ENCODE measurements at regions of chr15 and their contacts with region 1.

Region 1: DNA sequence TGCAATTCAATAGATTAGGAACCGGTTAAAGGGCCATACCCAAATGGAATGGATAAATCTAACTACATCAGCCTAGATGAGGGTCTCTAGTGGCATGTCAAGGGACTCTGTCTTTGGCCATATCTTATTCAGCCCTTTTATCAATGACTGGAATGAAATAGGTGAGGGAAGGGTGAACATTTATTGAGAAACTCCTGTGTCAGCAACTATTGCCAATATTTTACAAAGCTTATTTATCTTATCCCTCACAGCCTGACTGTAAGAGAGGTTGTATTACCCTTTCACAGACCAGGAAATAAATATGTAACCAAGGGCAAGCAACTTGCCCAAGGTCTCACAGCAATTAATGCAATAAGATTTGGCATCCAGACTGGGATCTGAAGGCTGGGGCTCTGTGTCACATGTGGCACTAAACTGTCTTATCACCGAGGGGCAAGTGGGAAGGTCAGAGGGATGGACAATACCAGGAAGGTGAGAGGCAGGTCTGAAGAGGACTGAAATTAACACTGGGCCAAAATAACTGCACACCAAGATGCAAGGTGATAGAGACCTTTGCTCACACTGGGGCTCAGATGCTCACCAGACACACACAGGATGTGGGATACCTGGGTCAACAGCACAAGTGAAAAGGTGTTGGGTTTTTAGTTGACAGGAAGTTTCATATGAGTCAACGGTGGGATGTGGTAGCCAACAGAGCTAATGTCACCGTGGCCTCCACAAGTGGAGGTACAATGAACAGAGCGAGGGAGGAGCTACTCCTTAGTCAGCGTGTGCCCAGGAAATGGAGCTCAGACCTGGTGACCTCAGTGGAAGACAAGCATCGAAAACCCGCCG is 261.3 kb downstream of the RPLP1 start:
- DNase-seq: peak; percentile 85
- ATAC-seq: peak; percentile 96
- H3K4me3 Mint-ChIP-seq: peak overlapping the region; percentile 21
- H3K27ac Mint-ChIP-seq: peak overlapping the region; percentile 85
- H3K4me1 Mint-ChIP-seq: peaks cover 60% of the 10 kb centered on the region
- H3K27me3 Mint-ChIP-seq: peaks cover 7% of the 10 kb centered on the region

Region 2: DNA sequence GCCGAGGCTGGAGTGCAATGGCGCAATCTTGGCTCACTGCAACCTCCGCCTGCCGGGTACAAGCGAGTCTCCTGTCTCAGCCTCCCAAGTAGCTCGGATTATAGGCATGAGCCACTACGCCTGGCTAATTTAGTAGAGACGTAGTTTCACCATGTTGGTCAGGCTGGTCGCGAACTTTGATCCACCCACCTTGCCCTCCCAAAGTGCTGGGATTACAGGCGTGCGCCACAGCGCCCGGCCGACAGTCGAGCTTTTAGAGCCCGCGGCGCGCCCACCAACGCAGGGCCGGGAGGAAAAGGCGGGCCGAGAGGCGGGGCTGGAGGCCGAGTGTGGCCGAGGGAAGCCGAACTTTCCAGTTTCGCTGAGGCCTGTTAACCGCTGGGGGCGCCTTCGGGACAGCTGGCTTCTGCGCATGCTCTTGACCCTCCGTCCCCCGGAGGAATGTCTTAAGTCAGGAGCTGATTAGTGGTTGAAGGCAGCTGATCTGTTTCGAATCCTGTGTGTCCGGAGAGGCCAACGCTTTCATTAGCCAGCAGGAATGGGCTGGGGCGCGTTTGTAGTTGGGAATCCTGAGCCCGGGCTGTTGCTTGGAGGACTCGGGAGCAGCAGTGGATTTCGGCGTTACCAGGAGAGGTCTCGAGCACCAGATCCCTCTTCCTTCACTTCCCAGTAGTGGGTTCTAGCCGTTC is 251.3 kb before region 1 on chr15:
- CTCF ChIA-PET with region 1: no interaction called
- POLR2A ChIA-PET with region 1: no interaction called
- intact Hi-C with region 1: loop called in 1 of 2 experiments (anchors 10 kb)
- DNase-seq: peak; percentile 95
- ATAC-seq: peak; percentile 94
- H3K4me3 Mint-ChIP-seq: peak overlapping the region; percentile 82
- H3K27ac Mint-ChIP-seq: peak overlapping the region; percentile 89
- H3K4me1 Mint-ChIP-seq: peaks cover 25% of the 10 kb centered on the region
- H3K27me3 Mint-ChIP-seq: no peaks in the 10 kb centered on the region

Region 3: GRCh38 chr15:69666411-69666882 is 47.5 kb before region 1 on chr15:
- CTCF ChIA-PET with region 1: interaction called, 3 read pairs
- POLR2A ChIA-PET with region 1: no interaction called
- intact Hi-C with region 1: loop called in 1 of 2 experiments (anchors 1 kb)
- DNase-seq: peak; percentile 80
- ATAC-seq: peak; percentile 69
- H3K4me3 Mint-ChIP-seq: no peak overlapping the region
- H3K27ac Mint-ChIP-seq: peak overlapping the region; percentile 80
- H3K4me1 Mint-ChIP-seq: peaks cover 29% of the 10 kb centered on the region
- H3K27me3 Mint-ChIP-seq: no peaks in the 10 kb centered on the region

Region 4: GRCh38 chr15:69760890-69761568 is 47.1 kb after region 1 on chr15:
- CTCF ChIA-PET with region 1: interaction called, 9 read pairs
- POLR2A ChIA-PET with region 1: interaction called, 12 read pairs
- intact Hi-C with region 1: loop called (anchors 1 kb)
- DNase-seq: peak; percentile 89
- ATAC-seq: peak; percentile 42
- H3K4me3 Mint-ChIP-seq: peak overlapping the region; percentile 25
- H3K27ac Mint-ChIP-seq: peak overlapping the region; percentile 94
- H3K4me1 Mint-ChIP-seq: peaks cover 72% of the 10 kb centered on the region
- H3K27me3 Mint-ChIP-seq: no peaks in the 10 kb centered on the region

Region 5: GRCh38 chr15:70299931-70300869 is 586.3 kb after region 1 on chr15:
- CTCF ChIA-PET with region 1: no interaction called
- POLR2A ChIA-PET with region 1: no interaction called
- intact Hi-C with region 1: loop called (anchors 5 to 10 kb)
- DNase-seq: peak; percentile 89
- ATAC-seq: peak; percentile 100
- H3K4me3 Mint-ChIP-seq: no peak overlapping the region
- H3K27ac Mint-ChIP-seq: no peak overlapping the region
- H3K4me1 Mint-ChIP-seq: peaks cover 11% of the 10 kb centered on the region
- H3K27me3 Mint-ChIP-seq: no peaks in the 10 kb centered on the region